Posterior vena cava (tissue), 2 donors: ENCODE measurements at regions of chr4 and their contacts with region 1.

Region 1: DNA sequence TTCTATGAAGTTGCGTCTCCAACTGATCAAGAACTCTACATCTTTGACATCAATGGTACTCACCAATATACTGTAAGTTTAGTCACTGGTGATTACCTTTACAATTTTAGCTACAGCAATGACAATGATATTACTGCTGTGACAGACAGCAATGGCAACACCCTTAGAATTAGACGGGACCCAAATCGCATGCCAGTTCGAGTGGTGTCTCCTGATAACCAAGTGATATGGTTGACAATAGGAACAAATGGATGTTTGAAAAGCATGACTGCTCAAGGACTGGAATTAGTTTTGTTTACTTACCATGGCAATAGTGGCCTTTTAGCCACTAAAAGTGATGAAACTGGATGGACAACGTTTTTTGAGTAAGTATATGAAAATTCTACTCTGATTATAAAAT is 162.3 kb downstream of the DCTD start:
- DNase-seq: no peak

Region 2: GRCh38 chr4:182724414-182724813 is 30.5 kb before region 1 on chr4:
- intact Hi-C with region 1: loop called in 1 of 2 experiments (anchors 1 kb)
- DNase-seq: no peak